ENCODE measurements at regions of chr11 and their contacts with region 1.

Region 1: DNA sequence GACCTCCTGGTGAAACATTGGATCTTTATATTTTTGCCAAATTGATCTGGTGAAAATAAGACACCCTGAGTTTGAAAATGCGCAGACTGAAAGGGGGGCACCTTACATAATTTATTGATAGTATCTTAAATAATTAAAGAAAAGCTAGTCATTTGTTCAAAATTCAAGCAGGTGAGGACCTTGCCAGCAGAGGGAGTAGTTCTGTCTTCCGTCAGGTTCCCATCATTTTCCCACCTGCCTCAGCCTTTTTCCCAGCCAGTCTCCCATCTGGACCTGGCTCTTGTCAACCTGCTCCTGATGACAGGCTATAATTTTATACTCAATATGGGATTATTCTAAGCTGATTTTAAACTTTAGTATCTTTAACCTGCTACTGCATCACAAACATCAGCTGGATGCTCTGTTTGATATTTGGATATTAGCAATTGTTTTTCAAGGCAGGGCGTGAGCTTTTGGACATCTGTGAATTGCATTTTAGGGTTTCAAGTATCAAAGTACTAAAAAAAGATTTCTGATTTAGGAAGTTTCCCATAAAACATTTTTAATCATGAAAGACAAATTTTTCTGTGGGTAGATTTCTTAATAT is 132.0 kb downstream of the ELP4 start:
- H3K4me3 ChIP-seq: no peak overlapping the region
- H3K27ac ChIP-seq: no peak overlapping the region
- H3K4me1 ChIP-seq: no peaks in the 10 kb centered on the region
- CTCF ChIP-seq: no peak

Region 2: DNA sequence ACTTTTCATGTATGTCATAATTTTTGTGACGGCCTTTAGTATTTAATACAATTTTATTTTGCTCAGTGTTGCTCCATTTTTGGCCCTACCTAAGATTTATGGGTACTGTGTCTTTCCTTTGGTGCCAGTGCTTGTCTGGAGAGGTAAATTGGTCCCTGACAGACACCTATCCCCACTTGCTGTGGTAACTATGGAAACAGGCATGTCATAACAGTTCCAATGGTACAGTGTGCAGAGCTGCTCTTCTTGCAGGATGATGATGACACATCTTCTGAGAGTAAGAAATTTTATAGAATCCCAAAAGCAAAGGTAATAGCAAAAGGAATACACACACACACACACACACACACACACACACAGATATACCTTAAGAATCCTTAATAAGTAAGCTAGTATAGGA is 13.5 kb before region 1 on chr11:
- CTCF ChIA-PET with region 1: interaction called, 20 read pairs
- POLR2A ChIA-PET with region 1: no interaction called
- H3K4me3 ChIP-seq: no peak overlapping the region
- H3K27ac ChIP-seq: no peak overlapping the region
- H3K4me1 ChIP-seq: no peaks in the 10 kb centered on the region
- CTCF ChIP-seq: no peak

Region 3: GRCh38 chr11:31655483-31655882 is 13.9 kb after region 1 on chr11:
- CTCF ChIA-PET with region 1: interaction called, 20 read pairs
- POLR2A ChIA-PET with region 1: no interaction called
- H3K4me3 ChIP-seq: no peak overlapping the region
- H3K27ac ChIP-seq: no peak overlapping the region
- H3K4me1 ChIP-seq: no peaks in the 10 kb centered on the region
- CTCF ChIP-seq: no peak

Region 4: DNA sequence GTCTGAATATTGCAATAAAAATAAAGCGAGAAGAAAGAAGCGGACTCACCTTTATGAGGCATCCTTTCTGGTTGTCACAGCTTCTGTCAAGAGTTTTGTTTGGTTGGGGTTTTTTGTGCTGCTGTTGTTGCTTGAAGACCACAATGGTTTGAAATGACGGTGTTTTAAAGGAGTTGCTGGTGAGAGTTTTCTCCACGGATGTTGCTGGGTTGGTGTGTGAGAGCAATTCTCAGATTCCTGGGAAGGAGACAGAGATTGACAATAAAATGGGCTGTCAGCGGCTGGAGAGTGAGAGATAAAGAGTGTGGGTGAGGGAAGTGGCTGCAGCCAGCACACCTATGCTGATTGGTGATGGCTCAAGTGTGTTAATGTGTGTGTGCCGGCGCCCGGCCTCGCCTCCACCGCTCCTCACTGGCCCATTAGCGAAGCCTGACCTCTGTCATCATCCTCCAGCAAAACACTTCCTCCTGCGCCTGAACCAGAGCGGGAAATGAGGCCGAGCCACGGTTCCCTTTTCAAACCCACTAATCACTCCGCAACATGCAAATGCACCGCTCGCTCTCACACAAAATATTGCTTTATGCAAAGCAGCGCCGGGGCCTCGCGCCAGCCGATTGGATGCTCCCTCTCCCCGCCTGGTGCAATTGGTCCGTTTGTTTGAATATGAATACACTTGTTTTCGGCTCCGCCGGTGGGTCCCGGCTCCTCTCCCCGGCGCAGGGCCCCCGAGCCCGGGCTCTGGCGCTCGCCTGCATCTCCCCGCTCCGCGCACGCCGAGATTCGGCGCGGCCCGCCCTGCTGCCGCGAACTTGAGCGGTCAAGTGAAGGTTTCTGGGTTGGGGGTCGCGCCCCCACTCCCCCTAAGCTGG is 169.4 kb after region 1 on chr11 and contains the start of gene PAX6:
- CTCF ChIA-PET with region 1: interaction called, 10 read pairs
- POLR2A ChIA-PET with region 1: no interaction called
- H3K4me3 ChIP-seq: peak within 1 kb of the TSS; percentile 84
- H3K27ac ChIP-seq: peak within 1 kb of the TSS; percentile 93
- H3K4me1 ChIP-seq: no peaks in the 10 kb centered on the region
- CTCF ChIP-seq: no peak

Region 5: DNA sequence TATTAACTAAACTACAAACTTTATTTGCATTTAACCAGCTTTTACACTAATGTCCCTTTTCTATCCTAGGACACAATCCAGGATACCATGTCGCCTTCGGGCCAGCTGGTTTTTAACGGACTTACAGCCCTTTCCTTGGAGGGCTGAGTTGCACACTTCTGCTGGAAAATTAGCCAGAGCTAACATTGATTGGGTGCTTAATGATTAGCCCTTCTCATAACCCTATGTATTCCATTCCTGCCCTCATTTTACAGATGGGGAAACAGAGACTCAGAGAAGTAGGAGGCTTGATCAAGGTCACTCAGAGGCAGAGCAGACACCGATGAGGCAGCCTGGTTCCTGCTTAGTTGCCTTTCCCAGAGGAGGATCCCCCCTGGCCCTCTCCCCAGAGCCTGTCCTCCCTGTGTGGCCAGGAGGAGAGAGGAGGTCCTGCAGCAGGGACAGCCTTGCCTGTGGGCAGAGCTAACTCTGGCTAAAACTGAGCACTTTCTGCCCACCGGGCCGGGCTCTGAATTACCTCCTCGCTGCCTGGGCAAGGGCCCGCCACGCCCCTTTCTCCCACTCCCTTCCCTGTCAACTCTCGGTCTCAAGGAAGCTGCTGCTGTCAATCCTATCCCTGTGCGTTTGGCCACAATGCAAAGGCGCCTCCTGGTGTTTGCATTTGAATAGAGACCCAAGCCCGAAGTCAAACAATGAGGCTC is 229.2 kb after region 1 on chr11:
- CTCF ChIA-PET with region 1: interaction called, 21 read pairs
- POLR2A ChIA-PET with region 1: no interaction called
- H3K4me3 ChIP-seq: peak overlapping the region; percentile 14
- H3K27ac ChIP-seq: no peak overlapping the region
- H3K4me1 ChIP-seq: 0 out of 2 replicates have a peak, but pooled peaks cover 3% of the 10 kb centered on the region
- CTCF ChIP-seq: 0 out of 2 replicates have a peak, but pooled peaks have one; percentile 9

Region 6: DNA sequence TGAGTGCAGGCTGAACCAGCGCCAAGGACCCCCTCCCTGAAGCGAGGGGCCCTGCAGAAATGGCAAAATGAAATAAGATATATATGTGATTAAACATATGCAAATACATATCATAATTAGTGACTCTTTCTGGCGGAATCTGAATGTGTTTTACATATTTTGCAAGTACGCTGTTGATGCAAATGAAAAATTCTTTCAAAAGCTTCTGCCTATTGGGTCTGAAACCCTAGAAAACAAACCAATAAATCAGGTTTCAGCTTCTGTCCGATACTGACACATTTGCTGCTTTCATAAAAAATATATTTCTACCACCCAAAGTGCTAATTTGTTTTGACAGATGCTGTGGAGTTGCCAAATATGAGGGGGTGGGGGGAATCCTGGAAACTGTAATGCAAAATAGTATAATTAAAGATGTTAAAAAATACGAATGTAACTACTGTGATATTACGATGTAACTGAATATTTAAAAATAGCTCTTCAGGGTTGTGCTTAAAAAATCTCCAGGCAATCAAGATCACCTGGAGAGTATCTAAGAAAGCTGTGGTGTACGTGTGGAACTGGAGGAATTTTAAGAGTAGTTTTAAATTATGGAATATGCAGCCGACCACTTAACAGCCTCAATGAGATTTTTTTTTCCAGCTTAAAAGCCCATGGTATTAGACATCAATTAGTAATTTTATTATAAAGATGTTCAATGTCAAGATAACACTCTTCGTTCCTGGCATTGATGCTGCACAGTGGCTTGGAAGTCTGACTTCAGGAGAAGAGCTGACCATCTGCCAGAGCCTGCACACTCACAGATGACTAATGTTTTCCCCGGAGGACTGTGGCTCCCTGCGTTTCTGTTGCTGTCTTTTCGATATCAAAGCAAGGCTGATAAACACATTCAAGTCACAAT is 327.1 kb after region 1 on chr11:
- CTCF ChIA-PET with region 1: no interaction called
- POLR2A ChIA-PET with region 1: no interaction called
- H3K4me3 ChIP-seq: no peak overlapping the region
- H3K27ac ChIP-seq: no peak overlapping the region
- H3K4me1 ChIP-seq: no peaks in the 10 kb centered on the region
- CTCF ChIP-seq: no peak

Measured in HEK293 (cell line).